ENCODE measurements at regions of chr13 and their contacts with region 1.

Region 1: GRCh38 chr13:73898276-73898675 is 235.9 kb downstream of the KLF12 start:
- DNase-seq: no peak
- ATAC-seq: no peak
- H3K4me3 ChIP-seq: no peak overlapping the region
- H3K4me3 Mint-ChIP-seq: no peak overlapping the region
- H3K27ac ChIP-seq: no peak overlapping the region
- H3K27ac Mint-ChIP-seq: no peak overlapping the region
- H3K4me1 ChIP-seq: no peaks in the 10 kb centered on the region
- H3K4me1 Mint-ChIP-seq: peaks cover 59% of the 10 kb centered on the region
- H3K27me3 ChIP-seq: no peaks in the 10 kb centered on the region
- H3K27me3 Mint-ChIP-seq: no peaks in the 10 kb centered on the region
- CTCF ChIP-seq: no peak

Region 2: DNA sequence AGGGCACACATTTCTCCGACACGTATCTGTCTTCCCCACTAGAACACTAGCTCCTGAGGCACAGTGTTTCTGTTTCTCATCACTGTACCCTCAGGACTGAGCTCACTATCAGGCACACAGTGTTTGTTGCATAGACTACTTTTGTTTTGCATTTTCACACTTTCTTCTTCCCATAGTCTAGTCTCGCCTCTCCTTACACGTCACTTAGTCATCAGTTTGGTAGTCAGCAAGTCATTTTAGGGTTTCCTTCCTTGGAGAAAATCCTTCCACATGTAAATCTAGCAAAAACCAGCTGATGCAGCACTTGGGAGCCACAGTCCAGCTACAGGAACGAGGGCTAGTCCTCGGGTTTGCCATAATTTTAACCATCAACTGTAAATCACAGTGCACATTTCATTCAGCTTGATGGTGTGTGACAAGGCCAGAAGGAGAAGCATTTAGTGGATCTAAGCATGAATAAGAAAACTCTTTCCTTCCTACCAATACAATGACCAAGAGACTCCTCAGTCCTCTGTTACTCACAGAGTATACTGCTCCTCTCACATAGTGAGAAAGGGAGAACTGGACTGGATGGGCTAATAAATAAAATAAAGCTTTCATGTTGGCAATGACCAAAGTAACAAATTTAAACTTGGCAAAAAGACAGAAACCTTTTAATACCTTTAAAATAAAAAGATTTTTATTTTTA is 14.9 kb after region 1 on chr13:
- CTCF ChIA-PET with region 1: no interaction called
- POLR2A ChIA-PET with region 1: interaction called, 5 read pairs
- intact Hi-C with region 1: loop called in 1 of 2 experiments (anchors 2 kb)
- DNase-seq: peak in 1 of 9 experiments; percentile 25
- ATAC-seq: peak; percentile 31
- H3K4me3 ChIP-seq: no peak overlapping the region
- H3K4me3 Mint-ChIP-seq: no peak overlapping the region
- H3K27ac ChIP-seq: no peak overlapping the region
- H3K27ac Mint-ChIP-seq: peak overlapping the region; percentile 37
- H3K4me1 ChIP-seq: no peaks in the 10 kb centered on the region
- H3K4me1 Mint-ChIP-seq: peaks cover 54% of the 10 kb centered on the region
- H3K27me3 ChIP-seq: no peaks in the 10 kb centered on the region
- H3K27me3 Mint-ChIP-seq: no peaks in the 10 kb centered on the region
- CTCF ChIP-seq: no peak

Region 3: GRCh38 chr13:73955977-73956500 is 57.8 kb after region 1 on chr13:
- CTCF ChIA-PET with region 1: no interaction called
- POLR2A ChIA-PET with region 1: no interaction called
- intact Hi-C with region 1: loop called in 1 of 2 experiments (anchors 2 kb)
- DNase-seq: no peak
- ATAC-seq: no peak
- H3K4me3 ChIP-seq: no peak overlapping the region
- H3K4me3 Mint-ChIP-seq: no peak overlapping the region
- H3K27ac ChIP-seq: no peak overlapping the region
- H3K27ac Mint-ChIP-seq: no peak overlapping the region
- H3K4me1 ChIP-seq: peaks cover 13% of the 10 kb centered on the region
- H3K4me1 Mint-ChIP-seq: peaks cover 64% of the 10 kb centered on the region
- H3K27me3 ChIP-seq: no peaks in the 10 kb centered on the region
- H3K27me3 Mint-ChIP-seq: no peaks in the 10 kb centered on the region
- CTCF ChIP-seq: no peak